ENCODE measurements at regions of chr2 and their contacts with region 1.

Region 1: GRCh38 chr2:180077295-180077906 is 70.3 kb upstream of the CWC22 start:
- DNase-seq: no peak
- H3K4me3 ChIP-seq: no peak overlapping the region
- H3K27ac ChIP-seq: no peak overlapping the region
- H3K4me1 ChIP-seq: peaks cover 0 to 2% (median under 1%) of the 10 kb centered on the region in 4 experiments; a peak in 2 of 7 replicates
- H3K27me3 ChIP-seq: no peaks in the 10 kb centered on the region
- CTCF ChIP-seq: peak in 2 of 3 experiments; percentile 47 to 67; a peak in 2 of 4 replicates
- EP300 ChIP-seq: no peak
- POLR2A ChIP-seq: no peak
- RAD21 ChIP-seq: peak; percentile 73 to 89

Region 2: GRCh38 chr2:179936654-179937053 is 140.7 kb before region 1 on chr2:
- CTCF ChIA-PET with region 1: interaction called, 13 read pairs
- POLR2A ChIA-PET with region 1: no interaction called
- DNase-seq: peak; percentile 23 to 77
- H3K4me3 ChIP-seq: no peak overlapping the region
- H3K27ac ChIP-seq: no peak overlapping the region
- H3K4me1 ChIP-seq: peaks cover 0 to 2% (median 0%) of the 10 kb centered on the region in 4 experiments; a peak in 1 of 7 replicates
- H3K27me3 ChIP-seq: peaks cover 0 to 1% (median 0%) of the 10 kb centered on the region in 4 experiments; a peak in 1 of 7 replicates
- CTCF ChIP-seq: peak; percentile 42 to 62 (median 60)
- EP300 ChIP-seq: no peak
- POLR2A ChIP-seq: no peak
- RAD21 ChIP-seq: peak; percentile 60 to 67

Region 3: DNA sequence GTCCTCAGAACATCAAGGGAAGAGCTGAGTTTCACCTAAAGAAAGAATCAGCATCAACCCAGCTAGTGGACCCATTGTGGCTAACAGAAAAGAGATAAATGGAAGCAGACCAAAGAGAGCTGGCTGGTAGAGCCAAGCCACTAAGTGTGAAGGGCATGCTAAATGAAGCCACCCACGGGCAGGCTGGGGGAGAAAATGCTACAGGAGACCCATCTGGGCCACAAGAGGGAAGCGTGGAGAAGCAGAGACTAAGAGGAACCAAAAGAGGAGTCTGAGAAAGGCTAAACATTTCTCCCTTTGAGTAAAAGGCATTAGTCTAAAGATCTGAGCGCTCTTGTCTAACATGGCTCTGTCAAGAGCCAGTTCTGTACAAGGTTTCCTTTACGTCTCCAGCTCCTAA is 86.1 kb before region 1 on chr2:
- CTCF ChIA-PET with region 1: interaction called, 21 read pairs
- POLR2A ChIA-PET with region 1: no interaction called
- DNase-seq: no peak
- H3K4me3 ChIP-seq: no peak overlapping the region
- H3K27ac ChIP-seq: no peak overlapping the region
- H3K4me1 ChIP-seq: peaks cover 2 to 6% (median 6%) of the 10 kb centered on the region in 4 experiments; a peak in 4 of 7 replicates
- H3K27me3 ChIP-seq: no peaks in the 10 kb centered on the region
- CTCF ChIP-seq: peak; percentile 33 to 40 (median 38); a peak in 3 of 4 replicates
- EP300 ChIP-seq: no peak
- POLR2A ChIP-seq: no peak
- RAD21 ChIP-seq: peak; percentile 42 to 61

Region 4: GRCh38 chr2:180056367-180057118 is 20.9 kb before region 1 on chr2:
- CTCF ChIA-PET with region 1: interaction called, 19 read pairs
- POLR2A ChIA-PET with region 1: interaction called, 16 read pairs
- DNase-seq: peak in 1 of 2 experiments; percentile 70
- H3K4me3 ChIP-seq: peak overlapping the region in 1 of 4 experiments; percentile 43; a peak in 1 of 8 replicates
- H3K27ac ChIP-seq: peak overlapping the region; percentile 93
- H3K4me1 ChIP-seq: peaks cover 5 to 23% (median 18%) of the 10 kb centered on the region in 4 experiments
- H3K27me3 ChIP-seq: no peaks in the 10 kb centered on the region
- CTCF ChIP-seq: no peak
- EP300 ChIP-seq: peak in 1 of 2 experiments; percentile 89; a peak in 2 of 3 replicates
- POLR2A ChIP-seq: no peak
- RAD21 ChIP-seq: peak in 1 of 2 experiments; percentile 31; a peak in 2 of 4 replicates

Region 5: GRCh38 chr2:180110469-180110868 is 33.1 kb after region 1 on chr2:
- CTCF ChIA-PET with region 1: no interaction called
- POLR2A ChIA-PET with region 1: no interaction called
- DNase-seq: no peak
- H3K4me3 ChIP-seq: no peak overlapping the region
- H3K27ac ChIP-seq: no peak overlapping the region
- H3K4me1 ChIP-seq: no peaks in the 10 kb centered on the region
- H3K27me3 ChIP-seq: no peaks in the 10 kb centered on the region
- CTCF ChIP-seq: no peak
- EP300 ChIP-seq: no peak
- POLR2A ChIP-seq: no peak
- RAD21 ChIP-seq: no peak

Measured in H1 (cell line).